Heart left ventricle (tissue), 16 donors: ENCODE measurements at regions of chr5 and their contacts with region 1.

Region 1: GRCh38 chr5:159905496-159905895 is 10.8 kb upstream of the ADRA1B start:
- DNase-seq: no peak
- ATAC-seq: no peak
- H3K4me3 ChIP-seq: no peak overlapping the region
- H3K27ac ChIP-seq: no peak overlapping the region
- H3K4me1 ChIP-seq: no peaks in the 10 kb centered on the region
- H3K27me3 ChIP-seq: no peaks in the 10 kb centered on the region
- CTCF ChIP-seq: no peak
- POLR2A ChIP-seq: no peak

Region 2: DNA sequence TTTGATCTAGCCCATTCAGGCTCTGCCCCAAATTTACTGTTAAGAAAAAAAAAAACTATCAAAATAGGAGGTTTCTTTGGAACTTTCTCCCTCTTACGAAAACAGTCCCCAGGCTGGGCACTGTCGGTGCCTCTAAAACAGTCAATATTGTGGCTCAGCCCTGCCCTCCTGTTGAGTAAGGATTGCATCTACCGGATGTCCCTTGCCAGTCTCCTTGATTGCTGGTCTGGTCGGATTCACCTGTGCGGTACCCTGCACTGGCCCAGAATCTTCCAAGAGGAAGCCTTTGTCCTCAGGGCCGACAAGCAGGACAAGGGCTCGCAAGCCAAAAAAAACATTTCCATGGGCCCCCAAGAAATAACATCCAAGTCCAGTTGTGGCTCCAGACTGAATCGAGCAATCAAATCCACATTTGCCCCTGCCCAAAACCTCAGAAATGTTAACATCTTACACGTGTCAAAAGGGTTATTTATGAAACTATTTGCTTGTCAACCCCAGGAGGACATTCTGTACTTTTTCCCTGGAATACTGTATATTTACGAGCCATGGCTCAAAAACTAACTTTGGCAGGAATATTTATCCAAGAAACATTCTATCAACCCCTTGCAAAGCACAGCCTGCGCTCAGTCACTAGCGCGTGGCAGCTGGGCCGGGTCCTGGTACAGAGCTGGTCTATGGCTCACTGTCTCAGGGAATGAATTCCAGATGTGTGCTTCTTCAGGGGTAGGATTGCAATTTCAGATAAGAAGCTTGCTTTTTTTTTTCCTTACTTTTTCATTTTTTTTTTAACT is 118.4 kb before region 1 on chr5:
- intact Hi-C with region 1: loop called in 1 of 10 experiments (anchors 10 kb)
- DNase-seq: peak in 3 of 5 donors; percentile 41 to 78 (median 59)
- ATAC-seq: peak; percentile 58 to 78 (median 74)
- H3K4me3 ChIP-seq: no peak overlapping the region
- H3K27ac ChIP-seq: peak overlapping the region in 4 of 12 donors; percentile 39 to 61 (median 48)
- H3K4me1 ChIP-seq: peaks cover 0 to 30% (median 0%) of the 10 kb centered on the region in 12 donors
- H3K27me3 ChIP-seq: no peaks in the 10 kb centered on the region
- CTCF ChIP-seq: no peak
- POLR2A ChIP-seq: no peak